ENCODE measurements at regions of chr20 and their contacts with region 1.

Region 1: DNA sequence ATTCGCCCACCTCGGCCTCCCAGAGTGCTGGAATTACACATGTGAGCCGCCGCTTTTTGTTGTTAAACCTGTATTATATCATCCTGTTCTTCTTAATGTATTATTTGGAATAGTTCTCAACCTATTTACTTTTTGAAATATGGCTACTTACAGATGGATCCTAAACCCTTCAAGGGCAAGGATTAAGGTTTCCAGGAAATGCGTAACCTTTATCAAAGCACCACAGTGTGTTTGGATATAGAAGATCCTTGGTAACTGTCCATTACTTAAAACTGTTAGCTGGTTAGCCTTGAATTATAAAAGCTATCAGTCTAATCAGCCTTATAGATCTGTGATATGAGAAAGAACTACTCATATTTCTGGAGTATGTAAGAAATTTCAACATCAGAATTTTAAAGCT is 12.3 kb upstream of the RPN2 start:
- DNase-seq: no peak
- H3K4me3 ChIP-seq: no peak overlapping the region
- CTCF ChIP-seq: no peak

Region 2: DNA sequence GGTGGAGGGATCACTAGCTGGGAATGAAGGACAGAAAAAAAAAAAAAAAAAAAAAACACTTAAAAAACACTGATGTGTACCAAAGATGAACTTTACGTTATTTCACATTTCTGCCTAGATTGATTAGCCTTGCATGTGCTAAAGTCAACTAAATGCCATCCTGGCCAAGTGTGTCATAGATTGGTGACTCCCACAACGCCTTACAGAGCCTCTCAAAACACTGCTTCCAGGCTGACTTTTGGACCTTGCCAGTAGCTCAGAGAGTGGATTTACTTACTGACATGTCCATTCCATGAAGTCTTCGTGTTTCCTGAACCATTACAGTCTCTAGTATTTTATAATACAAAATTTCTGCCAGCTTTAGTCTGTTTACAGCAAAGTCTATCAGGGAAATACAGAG is 111.6 kb before region 1 on chr20:
- CTCF ChIA-PET with region 1: no interaction called
- POLR2A ChIA-PET with region 1: no interaction called
- DNase-seq: no peak
- H3K4me3 ChIP-seq: no peak overlapping the region
- CTCF ChIP-seq: no peak

Region 3: GRCh38 chr20:37178839-37179670 is 12.2 kb after region 1 on chr20 and contains the starts of genes MROH8 and RPN2:
- CTCF ChIA-PET with region 1: interaction called, 18 read pairs
- POLR2A ChIA-PET with region 1: interaction called, 3 read pairs
- DNase-seq: peak; percentile 85
- H3K4me3 ChIP-seq: peak within 1 kb of the TSS; percentile 90
- CTCF ChIP-seq: no peak